Naive thymus-derived CD4-positive, alpha-beta T cell (primary cell): ENCODE measurements at regions of chr6 and their contacts with region 1.

Region 1: GRCh38 chr6:127737009-127737486 is 160.1 kb downstream of the C6orf58 start:
- DNase-seq: peak in 7 of 9 donors; percentile 47 to 76 (median 68)
- ATAC-seq: peak; percentile 93
- H3K4me3 ChIP-seq: no peak overlapping the region
- H3K4me3 Mint-ChIP-seq: no peak overlapping the region
- H3K27ac ChIP-seq: no peak overlapping the region
- H3K27ac Mint-ChIP-seq: peak overlapping the region; percentile 5 to 89 (median 53)
- H3K4me1 ChIP-seq: peaks cover 0 to 7% of the 10 kb centered on the region in 2 donors
- H3K4me1 Mint-ChIP-seq: peaks cover 24 to 77% (median 63%) of the 10 kb centered on the region in 7 donors
- H3K27me3 ChIP-seq: no peaks in the 10 kb centered on the region
- H3K27me3 Mint-ChIP-seq: no peaks in the 10 kb centered on the region

Region 2: DNA sequence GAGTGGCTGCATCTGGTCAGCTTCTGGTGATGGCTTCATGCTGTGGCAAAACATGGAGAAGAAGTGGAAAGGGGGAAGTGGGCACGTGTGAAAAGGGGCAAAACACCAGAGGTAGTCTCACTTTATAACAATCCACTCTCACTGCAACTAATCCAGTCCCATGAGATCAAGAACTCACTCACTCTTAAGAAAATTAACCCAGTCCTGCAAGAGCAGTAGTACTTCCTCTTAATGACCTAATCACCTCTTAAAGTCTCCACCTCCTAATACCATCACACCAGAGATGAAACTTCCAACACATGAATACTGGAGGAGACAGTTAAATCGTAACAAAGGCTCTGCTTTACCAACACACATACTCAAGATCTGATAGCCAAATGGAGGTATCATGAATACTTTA is 11.2 kb after region 1 on chr6:
- CTCF ChIA-PET with region 1: interaction called, 5 read pairs
- POLR2A ChIA-PET with region 1: no interaction called
- intact Hi-C with region 1: loop called in 1 of 2 experiments (anchors 1 kb)
- DNase-seq: no peak
- ATAC-seq: no peak
- H3K4me3 ChIP-seq: no peak overlapping the region
- H3K4me3 Mint-ChIP-seq: peak overlapping the region in 7 of 10 donors; percentile 2 to 45 (median 23)
- H3K27ac ChIP-seq: no peak overlapping the region
- H3K27ac Mint-ChIP-seq: peak overlapping the region; percentile 22 to 83 (median 62)
- H3K4me1 ChIP-seq: peaks cover 12 to 29% of the 10 kb centered on the region in 2 donors
- H3K4me1 Mint-ChIP-seq: peaks cover 19 to 81% (median 66%) of the 10 kb centered on the region in 7 donors
- H3K27me3 ChIP-seq: no peaks in the 10 kb centered on the region
- H3K27me3 Mint-ChIP-seq: no peaks in the 10 kb centered on the region

Region 3: GRCh38 chr6:127900935-127901334 is 163.9 kb after region 1 on chr6 and contains the start of gene THEMIS:
- CTCF ChIA-PET with region 1: no interaction called
- POLR2A ChIA-PET with region 1: no interaction called
- intact Hi-C with region 1: loop called in 1 of 2 experiments (anchors 5 kb)
- DNase-seq: peak; percentile 9 to 80 (median 73)
- ATAC-seq: peak; percentile 85
- H3K4me3 ChIP-seq: peak within 1 kb of the TSS; percentile 77
- H3K4me3 Mint-ChIP-seq: peak within 1 kb of the TSS; percentile 92 to 100 (median 98)
- H3K27ac ChIP-seq: peak within 1 kb of the TSS; percentile 77
- H3K27ac Mint-ChIP-seq: peak within 1 kb of the TSS; percentile 88 to 100 (median 95)
- H3K4me1 ChIP-seq: peaks cover 8 to 38% of the 10 kb centered on the region in 2 donors
- H3K4me1 Mint-ChIP-seq: peaks cover 22 to 72% (median 56%) of the 10 kb centered on the region in 7 donors
- H3K27me3 ChIP-seq: no peaks in the 10 kb centered on the region
- H3K27me3 Mint-ChIP-seq: no peaks in the 10 kb centered on the region
- total RNA-seq, gene THEMIS: 51.3 to 97.3 (median 54.7) TPM

Region 4: DNA sequence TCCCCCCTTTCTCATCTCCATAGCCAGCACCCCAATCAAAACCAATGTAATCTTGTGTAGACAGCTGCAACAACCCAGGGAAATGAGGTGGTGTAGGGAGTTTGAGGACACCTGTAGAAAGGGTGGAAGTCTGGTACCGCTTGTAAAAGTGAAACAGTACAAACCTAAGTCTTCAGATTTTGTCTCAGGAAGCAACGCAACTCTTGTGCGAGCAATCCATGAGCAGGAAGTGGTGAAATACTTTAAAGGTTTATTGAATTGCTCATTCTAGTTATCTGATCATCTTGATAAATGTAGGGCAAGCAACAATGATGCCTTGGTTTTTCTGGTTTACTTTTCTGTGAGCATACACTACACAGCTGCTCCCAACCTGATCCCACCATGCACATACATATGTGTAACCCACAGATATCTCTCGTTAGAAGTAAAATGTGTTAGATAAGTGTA is 234.9 kb after region 1 on chr6:
- CTCF ChIA-PET with region 1: interaction called, 3 read pairs
- POLR2A ChIA-PET with region 1: no interaction called
- intact Hi-C with region 1: loop called (anchors 1 to 2 kb)
- DNase-seq: peak; percentile 9 to 89 (median 84)
- ATAC-seq: peak; percentile 92
- H3K4me3 ChIP-seq: peak overlapping the region; percentile 43
- H3K4me3 Mint-ChIP-seq: peak overlapping the region; percentile 73 to 96 (median 88)
- H3K27ac ChIP-seq: peak overlapping the region; percentile 83
- H3K27ac Mint-ChIP-seq: peak overlapping the region; percentile 71 to 99 (median 97)
- H3K4me1 ChIP-seq: peaks cover 36 to 49% of the 10 kb centered on the region in 2 donors
- H3K4me1 Mint-ChIP-seq: peaks cover 15 to 83% (median 68%) of the 10 kb centered on the region in 7 donors
- H3K27me3 ChIP-seq: no peaks in the 10 kb centered on the region
- H3K27me3 Mint-ChIP-seq: no peaks in the 10 kb centered on the region

Region 5: DNA sequence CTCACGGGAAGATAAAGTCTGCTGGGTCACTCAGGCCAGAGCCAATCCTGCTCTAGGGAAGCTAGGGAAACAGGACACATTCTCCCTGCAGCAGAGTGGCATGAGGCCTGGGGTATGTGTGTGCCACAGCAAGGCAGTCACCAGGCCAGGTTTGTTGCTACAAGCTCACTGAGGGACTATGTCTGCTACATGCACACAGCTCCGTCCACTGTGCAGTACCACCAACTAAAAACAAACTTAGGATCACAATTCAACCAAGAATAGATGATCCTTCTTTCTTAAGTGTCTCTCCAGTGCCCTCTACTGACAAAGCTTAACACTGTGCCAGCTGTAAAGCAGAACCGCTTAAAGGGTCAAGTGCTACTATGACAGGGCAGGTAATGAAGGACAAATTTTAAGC is 590.8 kb after region 1 on chr6:
- CTCF ChIA-PET with region 1: interaction called, 9 read pairs
- POLR2A ChIA-PET with region 1: interaction called, 3 read pairs
- intact Hi-C with region 1: loop called (anchors 1 kb)
- DNase-seq: peak in 7 of 9 donors; percentile 13 to 37 (median 27)
- ATAC-seq: peak; percentile 76
- H3K4me3 ChIP-seq: no peak overlapping the region
- H3K4me3 Mint-ChIP-seq: no peak overlapping the region
- H3K27ac ChIP-seq: no peak overlapping the region
- H3K27ac Mint-ChIP-seq: no peak overlapping the region
- H3K4me1 ChIP-seq: no peaks in the 10 kb centered on the region
- H3K4me1 Mint-ChIP-seq: peaks cover 0 to 6% (median 0%) of the 10 kb centered on the region in 7 donors
- H3K27me3 ChIP-seq: no peaks in the 10 kb centered on the region
- H3K27me3 Mint-ChIP-seq: peaks cover 0 to 3% (median 0%) of the 10 kb centered on the region in 5 donors

Region 6: DNA sequence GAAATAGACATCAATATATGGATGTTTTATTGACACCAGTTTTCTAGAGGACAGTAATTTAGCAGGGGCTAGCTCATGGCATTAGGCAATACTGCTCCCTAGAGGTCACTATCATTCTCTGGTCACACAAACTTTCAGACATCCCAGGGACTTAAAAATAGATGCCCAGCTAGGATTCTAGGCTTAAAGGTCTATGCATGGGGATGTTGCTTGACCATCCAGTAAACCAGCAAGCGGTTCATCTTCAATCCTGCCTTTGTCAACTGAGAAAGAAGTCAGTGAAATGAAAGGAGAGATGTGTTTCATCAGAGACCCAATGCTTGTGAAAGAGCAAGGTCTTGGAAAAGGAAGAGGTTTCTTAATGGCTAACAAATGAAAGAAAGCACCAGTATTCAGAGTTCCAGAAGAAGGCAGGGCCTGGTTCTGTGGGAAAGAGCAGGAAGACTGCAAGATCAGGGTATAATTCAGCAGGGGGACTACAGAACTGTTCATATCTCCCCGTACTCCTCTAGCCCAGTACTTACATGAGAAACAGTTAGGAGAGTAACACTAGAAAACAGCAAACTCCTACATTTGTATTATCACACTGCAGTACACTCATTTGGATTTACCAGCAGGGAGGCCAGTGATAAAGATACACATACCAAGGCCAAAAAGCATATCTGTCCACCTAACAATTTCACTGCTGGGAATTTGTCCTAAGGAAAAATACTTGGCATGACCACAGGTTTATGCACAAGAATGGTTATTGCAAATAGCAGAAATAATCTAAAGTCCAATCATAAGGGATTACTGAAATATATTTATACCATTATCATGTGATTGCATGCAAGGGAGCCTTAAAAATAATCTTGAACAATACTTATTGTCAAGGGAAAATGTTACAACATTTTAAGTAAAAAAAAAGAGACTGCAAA is 994.5 kb after region 1 on chr6:
- CTCF ChIA-PET with region 1: interaction called, 4 read pairs
- POLR2A ChIA-PET with region 1: no interaction called
- intact Hi-C with region 1: loop called (anchors 1 to 2 kb)
- DNase-seq: peak in 4 of 9 donors; percentile 4 to 14 (median 7)
- ATAC-seq: no peak
- H3K4me3 ChIP-seq: no peak overlapping the region
- H3K4me3 Mint-ChIP-seq: no peak overlapping the region
- H3K27ac ChIP-seq: no peak overlapping the region
- H3K27ac Mint-ChIP-seq: no peak overlapping the region
- H3K4me1 ChIP-seq: no peaks in the 10 kb centered on the region
- H3K4me1 Mint-ChIP-seq: no peaks in the 10 kb centered on the region
- H3K27me3 ChIP-seq: peaks cover 0 to 3% of the 10 kb centered on the region in 2 donors
- H3K27me3 Mint-ChIP-seq: peaks cover 0 to 24% (median 11%) of the 10 kb centered on the region in 5 donors

Region 7: DNA sequence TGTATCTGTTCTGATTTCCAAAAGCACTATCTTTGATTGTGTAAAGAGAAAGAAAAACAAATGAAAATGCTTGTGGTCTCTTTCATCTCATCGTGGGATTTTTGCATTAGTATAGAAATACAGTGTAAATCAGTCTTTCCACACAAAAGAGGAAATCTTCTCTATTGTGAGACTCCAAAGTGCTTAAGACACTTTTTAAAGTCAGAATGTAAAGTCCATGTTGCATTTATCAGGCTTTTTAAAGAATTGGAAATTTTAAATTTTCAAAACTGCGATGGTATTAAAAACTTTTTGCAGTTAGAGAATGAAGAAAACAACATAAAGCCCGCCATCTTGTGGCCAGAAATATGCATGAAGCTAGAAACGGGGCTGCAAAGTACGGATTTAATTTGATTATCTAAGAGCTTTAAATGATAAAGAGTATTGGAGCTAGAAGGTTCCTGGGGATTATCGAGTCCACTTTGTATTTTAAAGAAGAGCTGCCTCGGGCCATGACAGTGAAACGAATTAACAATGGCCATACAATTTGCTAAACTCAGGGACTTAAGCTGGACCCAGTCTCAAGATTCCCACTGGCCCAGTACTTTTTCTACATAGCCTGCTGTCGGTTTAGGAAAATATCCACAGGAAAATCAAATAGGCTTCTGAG is 1633.3 kb after region 1 on chr6:
- CTCF ChIA-PET with region 1: no interaction called
- POLR2A ChIA-PET with region 1: no interaction called
- intact Hi-C with region 1: loop called in 1 of 2 experiments (anchors 1 kb)
- DNase-seq: peak in 7 of 9 donors; percentile 3 to 42 (median 29)
- ATAC-seq: peak; percentile 44
- H3K4me3 ChIP-seq: no peak overlapping the region
- H3K4me3 Mint-ChIP-seq: peak overlapping the region in 6 of 10 donors; percentile 13 to 65 (median 55)
- H3K27ac ChIP-seq: no peak overlapping the region
- H3K27ac Mint-ChIP-seq: no peak overlapping the region
- H3K4me1 ChIP-seq: peaks cover 0 to 5% of the 10 kb centered on the region in 2 donors
- H3K4me1 Mint-ChIP-seq: peaks cover 0 to 17% (median 9%) of the 10 kb centered on the region in 7 donors
- H3K27me3 ChIP-seq: no peaks in the 10 kb centered on the region
- H3K27me3 Mint-ChIP-seq: peaks cover 0 to 2% (median 0%) of the 10 kb centered on the region in 5 donors